ENCODE measurements at regions of chr14 and their contacts with region 1.

Region 1: DNA sequence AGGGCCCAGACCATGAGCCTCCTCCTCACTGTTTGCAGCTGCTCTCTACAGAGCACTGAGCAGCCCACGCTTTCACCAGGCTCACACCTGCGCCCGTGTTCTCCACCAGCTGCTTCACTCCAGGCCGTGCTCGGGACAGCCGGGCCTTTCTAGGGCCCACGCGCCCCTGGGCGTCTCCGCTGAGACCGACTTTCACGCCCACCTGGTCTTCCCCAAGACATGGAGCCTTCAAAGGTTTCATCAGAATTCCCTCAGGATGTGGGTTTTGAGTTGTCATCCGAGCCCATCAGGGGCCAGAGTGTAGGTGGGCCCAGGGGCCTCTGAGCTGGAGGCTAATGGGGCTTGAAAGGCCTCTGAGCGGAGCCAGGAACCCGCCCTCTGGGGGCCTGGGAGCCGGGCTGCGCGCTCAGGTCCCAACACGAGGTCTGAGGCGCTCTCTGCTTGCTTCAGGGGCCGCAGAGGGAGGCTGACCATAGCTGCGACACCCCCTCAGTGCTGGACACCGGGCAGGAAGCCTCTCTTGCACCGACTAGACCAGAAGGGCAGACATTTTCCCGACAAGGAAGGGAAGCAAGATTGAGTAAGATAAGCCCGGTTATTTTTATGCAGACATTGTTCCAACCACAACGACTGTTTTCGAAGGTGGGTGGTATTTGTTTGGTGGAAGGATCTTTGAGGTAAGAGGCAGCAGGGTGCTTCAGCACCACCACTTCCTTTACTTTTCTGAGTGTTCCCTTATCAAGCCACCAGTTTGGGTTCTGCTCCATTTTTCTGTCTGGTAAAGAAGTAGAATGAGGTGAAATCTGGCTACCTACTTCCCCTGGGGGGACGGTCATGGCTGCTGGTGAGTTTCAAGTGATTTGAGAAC is 125.0 kb upstream of the FUT8 start:
- DNase-seq: peak; percentile 69
- H3K4me3 Mint-ChIP-seq: peak overlapping the region; percentile 80
- H3K27ac Mint-ChIP-seq: peak overlapping the region; percentile 96
- H3K4me1 Mint-ChIP-seq: peaks cover 64% of the 10 kb centered on the region
- H3K27me3 Mint-ChIP-seq: no peaks in the 10 kb centered on the region

Region 2: DNA sequence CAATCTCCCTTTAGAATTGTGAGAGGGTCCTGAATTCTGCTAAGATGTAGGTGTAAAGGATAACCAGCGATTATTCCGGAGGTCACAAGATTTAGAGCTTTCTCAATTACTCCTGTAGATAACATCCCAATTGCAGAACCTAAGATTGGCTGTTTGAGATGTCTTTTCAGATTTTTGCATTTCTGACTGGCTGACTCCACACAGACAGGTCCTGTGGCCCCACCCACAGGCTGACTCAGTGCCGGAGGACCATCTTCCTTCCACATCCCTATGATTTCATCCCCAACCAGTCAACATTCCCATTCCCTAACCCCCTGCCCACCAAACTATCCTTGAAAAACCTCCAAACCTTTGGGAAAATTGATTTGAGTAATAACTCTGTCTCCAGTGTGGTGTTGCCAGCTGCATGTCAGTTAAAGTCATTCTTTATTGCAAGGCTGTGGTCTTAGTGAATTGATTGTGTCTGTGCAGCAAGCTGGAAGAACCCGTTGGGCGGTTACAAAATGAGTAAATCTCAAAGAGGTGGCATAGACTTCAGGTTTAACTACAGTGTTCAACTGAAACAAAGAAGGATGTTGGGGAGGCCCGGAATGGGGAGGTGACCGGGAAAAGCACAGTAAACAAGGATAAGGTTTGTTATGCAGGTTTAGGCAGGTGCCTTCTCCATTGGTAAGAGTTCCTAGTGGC is 290.2 kb before region 1 on chr14:
- CTCF ChIA-PET with region 1: no interaction called
- POLR2A ChIA-PET with region 1: no interaction called
- intact Hi-C with region 1: loop called (anchors 5 kb)
- DNase-seq: no peak
- H3K4me3 Mint-ChIP-seq: no peak overlapping the region
- H3K27ac Mint-ChIP-seq: no peak overlapping the region
- H3K4me1 Mint-ChIP-seq: peaks cover 48% of the 10 kb centered on the region
- H3K27me3 Mint-ChIP-seq: no peaks in the 10 kb centered on the region

Region 3: GRCh38 chr14:65222440-65222858 is 65.0 kb before region 1 on chr14:
- CTCF ChIA-PET with region 1: interaction called, 3 read pairs
- POLR2A ChIA-PET with region 1: no interaction called
- intact Hi-C with region 1: loop called (anchors 2 kb)
- DNase-seq: peak; percentile 78
- H3K4me3 Mint-ChIP-seq: no peak overlapping the region
- H3K27ac Mint-ChIP-seq: peak overlapping the region; percentile 45
- H3K4me1 Mint-ChIP-seq: peaks cover 33% of the 10 kb centered on the region
- H3K27me3 Mint-ChIP-seq: no peaks in the 10 kb centered on the region

Region 4: GRCh38 chr14:65302571-65303189 is 15.2 kb after region 1 on chr14:
- CTCF ChIA-PET with region 1: interaction called, 3 read pairs
- POLR2A ChIA-PET with region 1: interaction called, 5 read pairs
- intact Hi-C with region 1: loop called (anchors 1 kb)
- DNase-seq: peak; percentile 87
- H3K4me3 Mint-ChIP-seq: peak overlapping the region; percentile 40
- H3K27ac Mint-ChIP-seq: peak overlapping the region; percentile 87
- H3K4me1 Mint-ChIP-seq: peaks cover 45% of the 10 kb centered on the region
- H3K27me3 Mint-ChIP-seq: no peaks in the 10 kb centered on the region

Region 5: DNA sequence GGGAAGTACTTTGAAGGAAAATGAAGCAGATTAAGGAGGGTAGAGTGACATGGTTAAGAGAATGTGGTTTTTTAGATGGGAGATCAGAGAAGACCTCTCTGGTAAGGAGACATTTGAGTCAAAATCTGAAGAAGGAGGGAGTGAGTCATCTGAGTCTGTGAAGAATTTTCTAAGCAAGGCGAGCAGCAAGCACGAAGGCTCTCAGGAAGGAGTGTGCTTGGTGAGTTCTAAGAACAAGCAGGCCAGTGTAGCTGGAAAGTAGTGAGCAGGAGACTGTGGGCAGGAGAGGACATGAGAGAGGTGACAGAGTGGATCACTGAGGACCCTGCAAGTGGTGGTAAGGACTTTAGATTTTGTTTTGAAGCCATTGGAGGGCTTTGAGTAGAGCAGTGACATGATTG is 48.7 kb after region 1 on chr14:
- CTCF ChIA-PET with region 1: interaction called, 19 read pairs
- POLR2A ChIA-PET with region 1: interaction called, 9 read pairs
- intact Hi-C with region 1: loop called (anchors 1 kb)
- DNase-seq: peak; percentile 73
- H3K4me3 Mint-ChIP-seq: peak overlapping the region; percentile 72
- H3K27ac Mint-ChIP-seq: peak overlapping the region; percentile 90
- H3K4me1 Mint-ChIP-seq: peaks cover 44% of the 10 kb centered on the region
- H3K27me3 Mint-ChIP-seq: no peaks in the 10 kb centered on the region

Region 6: DNA sequence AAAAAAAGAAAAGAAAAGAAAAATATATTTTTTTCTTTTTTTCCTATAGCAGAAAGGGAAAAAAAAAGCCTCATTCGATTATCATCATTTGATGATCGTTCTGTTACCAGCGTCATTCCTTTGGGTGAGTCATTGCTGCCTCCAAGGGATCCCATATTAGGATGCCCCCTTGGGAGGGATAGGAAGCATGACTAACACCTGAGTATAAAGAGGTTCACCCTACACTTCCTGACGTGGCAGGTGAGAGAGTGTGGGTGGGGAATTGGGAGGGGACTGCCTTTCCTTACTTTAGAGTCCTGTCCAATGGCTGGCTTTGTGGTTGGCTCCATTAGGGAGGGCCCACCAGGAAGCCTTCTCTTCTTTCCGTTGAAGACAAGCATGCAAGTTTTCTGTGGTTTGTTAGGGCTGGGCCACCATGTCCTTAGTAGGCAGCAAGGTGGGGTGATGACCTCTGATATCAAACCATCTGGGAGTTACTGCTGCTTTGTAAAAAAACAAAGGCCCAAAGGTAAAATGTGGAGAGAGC is 68.9 kb after region 1 on chr14:
- CTCF ChIA-PET with region 1: no interaction called
- POLR2A ChIA-PET with region 1: no interaction called
- intact Hi-C with region 1: loop called (anchors 5 kb)
- DNase-seq: peak; percentile 70
- H3K4me3 Mint-ChIP-seq: no peak overlapping the region
- H3K27ac Mint-ChIP-seq: peak overlapping the region; percentile 57
- H3K4me1 Mint-ChIP-seq: peaks cover 43% of the 10 kb centered on the region
- H3K27me3 Mint-ChIP-seq: no peaks in the 10 kb centered on the region